MCF 10A (cell line): ENCODE measurements at regions of chr1 and their contacts with region 1.

Region 1: GRCh38 chr1:212608209-212608955 is at the start of gene ATF3:
- DNase-seq: peak; percentile 100
- H3K4me3 Mint-ChIP-seq: peak within 1 kb of the TSS; percentile 72
- H3K27ac Mint-ChIP-seq: peak within 1 kb of the TSS; percentile 98
- H3K4me1 Mint-ChIP-seq: peaks cover 37% of the 10 kb centered on the region
- H3K27me3 Mint-ChIP-seq: peaks cover 75% of the 10 kb centered on the region
- CTCF ChIP-seq: no peak
- total RNA-seq, gene ATF3: 85.3 and 114 TPM in 2 replicates

Region 2: GRCh38 chr1:212401838-212402582 is 206.4 kb before region 1 on chr1:
- CTCF ChIA-PET with region 1: no interaction called
- POLR2A ChIA-PET with region 1: no interaction called
- intact Hi-C with region 1: no loop called
- DNase-seq: peak; percentile 68
- H3K4me3 Mint-ChIP-seq: no peak overlapping the region
- H3K27ac Mint-ChIP-seq: peak overlapping the region; percentile 49
- H3K4me1 Mint-ChIP-seq: peaks cover 19% of the 10 kb centered on the region
- H3K27me3 Mint-ChIP-seq: no peaks in the 10 kb centered on the region
- CTCF ChIP-seq: no peak

Region 3: DNA sequence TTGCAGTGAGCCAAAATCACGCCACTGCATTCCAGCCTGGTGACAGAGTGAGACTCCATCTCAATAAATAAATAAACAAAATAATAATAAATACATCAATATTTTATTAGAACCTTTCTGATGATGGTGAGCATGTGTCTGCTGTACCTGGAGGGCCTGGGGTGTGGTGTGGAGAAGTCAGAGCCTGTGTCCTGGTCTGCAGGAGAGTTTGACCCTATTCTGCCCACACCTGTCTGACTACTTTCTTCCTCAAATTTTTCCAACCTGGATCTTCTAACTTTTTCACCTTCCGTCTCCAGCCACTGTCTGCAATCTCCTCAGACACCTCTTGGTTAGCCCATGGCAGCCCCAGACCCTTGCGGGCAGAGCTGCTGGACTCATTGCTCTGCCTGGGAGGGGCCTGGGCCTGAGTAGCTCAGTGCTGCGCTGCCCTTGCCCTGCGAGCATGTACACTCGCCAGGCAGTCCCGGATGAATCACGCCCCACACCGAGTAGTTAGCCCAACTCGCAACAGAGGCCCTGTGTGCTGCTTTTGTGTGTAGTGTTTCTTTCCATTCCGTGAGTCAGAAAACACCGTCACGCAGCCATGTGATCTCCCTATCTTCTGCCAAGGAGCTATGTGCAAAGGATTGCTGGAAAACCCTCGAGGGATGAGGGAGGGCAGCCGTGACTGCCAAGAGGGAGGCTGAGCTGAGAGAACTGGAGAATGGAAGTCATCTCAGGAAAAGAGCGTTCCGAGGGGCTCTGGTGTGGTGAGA is 138.5 kb before region 1 on chr1:
- CTCF ChIA-PET with region 1: interaction called, 7 read pairs
- POLR2A ChIA-PET with region 1: interaction called, 77 read pairs
- intact Hi-C with region 1: no loop called
- DNase-seq: peak; percentile 96
- H3K4me3 Mint-ChIP-seq: peak overlapping the region; percentile 49
- H3K27ac Mint-ChIP-seq: peak overlapping the region; percentile 90
- H3K4me1 Mint-ChIP-seq: peaks cover 10% of the 10 kb centered on the region
- H3K27me3 Mint-ChIP-seq: no peaks in the 10 kb centered on the region
- CTCF ChIP-seq: no peak

Region 4: GRCh38 chr1:212545941-212546635 is 62.3 kb before region 1 on chr1:
- CTCF ChIA-PET with region 1: no interaction called
- POLR2A ChIA-PET with region 1: interaction called, 25 read pairs
- intact Hi-C with region 1: no loop called
- DNase-seq: peak; percentile 49
- H3K4me3 Mint-ChIP-seq: no peak overlapping the region
- H3K27ac Mint-ChIP-seq: peak overlapping the region; percentile 24
- H3K4me1 Mint-ChIP-seq: peaks cover 9% of the 10 kb centered on the region
- H3K27me3 Mint-ChIP-seq: no peaks in the 10 kb centered on the region
- CTCF ChIP-seq: no peak

Region 5: DNA sequence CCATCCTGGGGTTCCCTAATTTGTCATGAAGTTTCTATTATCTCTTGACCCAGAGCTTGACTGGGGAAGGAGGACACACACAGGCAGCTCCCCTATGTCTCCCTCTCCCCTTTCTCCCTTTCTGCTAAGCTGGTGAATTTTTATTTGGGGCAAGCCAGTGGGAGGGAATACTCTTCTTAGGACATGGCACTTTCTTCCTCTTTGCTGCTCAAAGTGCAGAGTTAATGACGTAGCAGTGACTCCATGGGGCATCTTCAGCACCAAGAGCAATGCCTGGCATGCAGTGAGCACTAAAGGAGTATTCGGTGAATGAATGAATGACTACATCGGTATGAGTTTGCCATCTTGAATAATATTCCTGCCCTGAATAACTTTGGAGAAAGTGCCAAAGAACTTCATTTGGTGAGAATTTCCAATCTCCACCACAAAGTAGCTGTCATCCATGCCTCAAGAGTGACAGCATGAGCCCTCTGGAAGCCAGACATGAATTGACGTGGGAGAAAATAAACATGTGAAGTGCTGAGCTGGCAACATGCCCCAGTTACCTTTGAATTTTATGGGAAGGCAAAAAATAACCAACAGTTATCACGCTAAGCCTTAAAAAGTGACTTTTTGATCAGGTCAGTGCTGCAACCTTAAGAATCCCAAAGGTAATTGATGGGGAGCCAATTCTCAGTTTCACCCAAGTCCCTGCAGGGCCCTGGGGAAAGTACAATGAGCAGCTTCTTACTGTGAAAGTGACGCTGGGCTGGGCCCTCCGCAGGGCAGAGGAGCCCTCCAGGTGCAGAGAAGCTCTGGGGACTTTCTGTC is 22.0 kb before region 1 on chr1:
- CTCF ChIA-PET with region 1: interaction called, 3 read pairs
- POLR2A ChIA-PET with region 1: interaction called, 14 read pairs
- intact Hi-C with region 1: no loop called
- DNase-seq: no peak
- H3K4me3 Mint-ChIP-seq: no peak overlapping the region
- H3K27ac Mint-ChIP-seq: no peak overlapping the region
- H3K4me1 Mint-ChIP-seq: peaks cover 6% of the 10 kb centered on the region
- H3K27me3 Mint-ChIP-seq: peaks cover 38% of the 10 kb centered on the region
- CTCF ChIP-seq: no peak

Region 6: GRCh38 chr1:212630158-212630900 is 21.9 kb after region 1 on chr1:
- CTCF ChIA-PET with region 1: interaction called, 17 read pairs
- POLR2A ChIA-PET with region 1: interaction called, 5 read pairs
- intact Hi-C with region 1: no loop called
- DNase-seq: peak; percentile 79
- H3K4me3 Mint-ChIP-seq: no peak overlapping the region
- H3K27ac Mint-ChIP-seq: no peak overlapping the region
- H3K4me1 Mint-ChIP-seq: no peaks in the 10 kb centered on the region
- H3K27me3 Mint-ChIP-seq: peaks cover 13% of the 10 kb centered on the region
- CTCF ChIP-seq: peak; percentile 99

Region 7: DNA sequence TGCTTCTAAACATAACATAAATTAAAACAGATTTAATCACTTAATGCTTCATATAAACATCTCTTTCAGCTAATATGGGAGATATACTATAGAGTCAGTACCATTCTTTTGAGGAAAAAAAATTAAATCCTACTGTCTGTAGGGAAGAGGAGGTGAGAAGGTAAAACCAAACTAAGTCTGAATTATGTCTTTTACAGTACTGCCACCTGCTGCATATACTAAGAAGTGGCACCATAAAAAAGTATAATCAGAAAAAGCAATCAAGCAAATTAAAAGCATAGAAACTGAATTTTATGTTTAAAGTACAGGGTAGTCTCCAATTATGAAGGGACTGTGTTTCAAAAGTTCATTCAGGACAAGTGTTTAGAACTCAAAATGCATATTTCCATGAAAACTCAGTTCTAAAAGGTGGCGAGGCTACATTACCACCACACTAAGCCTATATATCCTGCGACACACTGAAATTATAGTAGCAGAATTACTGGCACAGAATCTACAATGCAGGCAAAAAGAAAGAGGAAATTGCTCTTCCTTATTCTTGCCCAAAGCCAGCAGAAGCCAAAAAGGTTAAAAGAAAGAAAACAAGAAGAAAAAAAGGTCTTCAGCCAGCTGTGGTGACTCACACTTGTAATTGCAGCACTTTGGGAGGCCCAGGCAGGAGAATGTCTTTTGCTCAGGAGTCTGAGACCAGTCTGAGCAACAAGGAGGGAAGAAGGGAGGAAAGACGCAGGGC is 174.2 kb after region 1 on chr1:
- CTCF ChIA-PET with region 1: interaction called, 5 read pairs
- POLR2A ChIA-PET with region 1: interaction called, 5 read pairs
- intact Hi-C with region 1: loop called (anchors 1 kb)
- DNase-seq: peak; percentile 58
- H3K4me3 Mint-ChIP-seq: no peak overlapping the region
- H3K27ac Mint-ChIP-seq: peak overlapping the region; percentile 57
- H3K4me1 Mint-ChIP-seq: peaks cover 7% of the 10 kb centered on the region
- H3K27me3 Mint-ChIP-seq: no peaks in the 10 kb centered on the region
- CTCF ChIP-seq: peak; percentile 84

Region 8: GRCh38 chr1:212994926-212995325 is 386.5 kb after region 1 on chr1:
- CTCF ChIA-PET with region 1: interaction called, 3 read pairs
- POLR2A ChIA-PET with region 1: interaction called, 3 read pairs
- intact Hi-C with region 1: loop called (anchors 5 kb)
- DNase-seq: no peak
- H3K4me3 Mint-ChIP-seq: no peak overlapping the region
- H3K27ac Mint-ChIP-seq: no peak overlapping the region
- H3K4me1 Mint-ChIP-seq: no peaks in the 10 kb centered on the region
- H3K27me3 Mint-ChIP-seq: no peaks in the 10 kb centered on the region
- CTCF ChIP-seq: no peak